OCI-LY7 (cell line): ENCODE measurements at regions of chr2 and their contacts with region 1.

Region 1: GRCh38 chr2:149006883-149007540 is 31.5 kb upstream of the LYPD6B start:
- DNase-seq: no peak
- H3K4me3 ChIP-seq: no peak overlapping the region
- H3K27ac ChIP-seq: no peak overlapping the region
- H3K4me1 ChIP-seq: no peaks in the 10 kb centered on the region
- CTCF ChIP-seq: no peak

Region 2: GRCh38 chr2:148989882-148990493 is 17.0 kb before region 1 on chr2:
- CTCF ChIA-PET with region 1: no interaction called
- POLR2A ChIA-PET with region 1: no interaction called
- intact Hi-C with region 1: no loop called
- DNase-seq: peak; percentile 68
- H3K4me3 ChIP-seq: no peak overlapping the region
- H3K27ac ChIP-seq: no peak overlapping the region
- H3K4me1 ChIP-seq: no peaks in the 10 kb centered on the region
- CTCF ChIP-seq: peak; percentile 85

Region 3: GRCh38 chr2:149537092-149537726 is 530.2 kb after region 1 on chr2:
- CTCF ChIA-PET with region 1: no interaction called
- POLR2A ChIA-PET with region 1: interaction called, 14 read pairs
- intact Hi-C with region 1: no loop called
- DNase-seq: no peak
- H3K4me3 ChIP-seq: no peak overlapping the region
- H3K27ac ChIP-seq: no peak overlapping the region
- H3K4me1 ChIP-seq: no peaks in the 10 kb centered on the region
- CTCF ChIP-seq: no peak